GM10248 (cell line): ENCODE measurements at regions of chr12 and their contacts with region 1.

Region 1: GRCh38 chr12:12171991-12172521 is 94.8 kb downstream of the LRP6 start:
- DNase-seq: peak; percentile 30
- CTCF ChIP-seq: no peak

Region 2: DNA sequence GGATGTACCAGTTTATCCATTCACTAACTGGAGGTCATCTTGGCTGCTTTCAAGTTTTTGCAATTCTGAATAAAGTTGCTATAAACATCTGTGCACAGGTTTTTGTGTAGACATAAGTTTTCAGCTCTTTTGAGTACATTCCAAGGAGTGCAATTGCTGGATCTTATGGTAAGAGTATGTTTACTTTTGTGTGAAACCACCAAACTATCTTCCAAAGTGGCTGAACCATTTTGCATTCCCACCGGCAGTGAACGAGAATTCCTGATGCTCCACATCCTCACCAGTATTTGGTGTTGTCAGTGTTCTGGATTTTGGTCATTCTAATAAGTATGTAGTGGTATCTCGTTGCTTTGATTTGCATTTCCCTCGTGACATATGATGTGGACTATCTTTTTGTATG is 251.8 kb before region 1 on chr12:
- CTCF ChIA-PET with region 1: no interaction called
- POLR2A ChIA-PET with region 1: no interaction called
- DNase-seq: no peak
- CTCF ChIP-seq: no peak

Region 3: DNA sequence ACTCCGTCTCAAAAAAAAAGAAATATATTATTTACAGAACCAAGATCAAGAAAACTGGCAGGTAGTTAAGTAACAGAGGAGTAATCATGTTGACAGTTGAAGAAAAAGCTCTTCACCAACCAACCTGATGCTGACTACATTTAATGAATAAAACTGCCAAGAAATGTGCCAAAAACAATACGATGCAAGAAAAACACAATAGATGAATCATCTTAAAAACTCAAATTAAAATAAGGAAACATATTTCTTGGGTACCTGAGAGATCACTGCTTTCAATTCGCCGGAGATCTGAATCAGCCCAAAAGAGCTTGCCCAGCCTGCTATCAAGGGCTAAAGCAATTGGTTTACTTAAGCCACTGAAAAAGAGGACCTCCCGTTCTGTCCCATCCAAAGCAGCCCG is 24.9 kb before region 1 on chr12:
- CTCF ChIA-PET with region 1: no interaction called
- POLR2A ChIA-PET with region 1: no interaction called
- DNase-seq: no peak
- CTCF ChIP-seq: no peak

Region 4: GRCh38 chr12:12159988-12160387 is 12.1 kb before region 1 on chr12:
- CTCF ChIA-PET with region 1: interaction called, 11 read pairs
- POLR2A ChIA-PET with region 1: no interaction called
- DNase-seq: no peak
- CTCF ChIP-seq: no peak

Region 5: GRCh38 chr12:12244341-12244740 is 72.3 kb after region 1 on chr12:
- CTCF ChIA-PET with region 1: no interaction called
- POLR2A ChIA-PET with region 1: no interaction called
- DNase-seq: no peak
- CTCF ChIP-seq: no peak